Activated CD4-positive, alpha-beta memory T cell treated with anti-CD3 and anti-CD28 coated beads for 36 hours (primary cell): ENCODE measurements at regions of chr2 and their contacts with region 1.

Region 1: GRCh38 chr2:53826587-53827397 is 33.0 kb downstream of the GPR75 start:
- DNase-seq: no peak
- H3K4me3 Mint-ChIP-seq: no peak overlapping the region
- H3K27ac Mint-ChIP-seq: no peak overlapping the region
- H3K4me1 Mint-ChIP-seq: no peaks in the 10 kb centered on the region
- H3K27me3 Mint-ChIP-seq: no peaks in the 10 kb centered on the region

Region 2: DNA sequence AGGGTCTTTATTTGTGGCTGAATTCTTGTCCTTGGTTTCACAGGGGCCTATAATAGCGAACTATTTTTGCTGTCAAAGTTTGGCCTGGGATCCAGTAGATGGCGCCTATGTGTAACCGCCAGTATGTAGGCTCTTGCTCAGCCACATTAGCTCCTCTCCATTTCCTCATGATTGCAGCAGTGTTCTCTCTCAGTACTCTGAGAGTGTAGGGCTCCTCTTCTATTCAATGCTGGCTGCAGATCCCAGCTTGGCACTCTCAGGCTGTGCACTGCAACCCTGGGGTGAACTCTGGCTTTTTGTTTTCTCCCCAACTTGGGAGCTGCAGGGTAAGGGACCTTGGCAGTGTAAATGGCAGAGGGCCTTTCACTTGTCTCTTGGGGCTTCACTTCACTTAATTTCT is 403.8 kb before region 1 on chr2:
- CTCF ChIA-PET with region 1: no interaction called
- POLR2A ChIA-PET with region 1: no interaction called
- intact Hi-C with region 1: loop called (anchors 10 kb)
- DNase-seq: peak; percentile 12
- H3K4me3 Mint-ChIP-seq: no peak overlapping the region
- H3K27ac Mint-ChIP-seq: no peak overlapping the region
- H3K4me1 Mint-ChIP-seq: no peaks in the 10 kb centered on the region
- H3K27me3 Mint-ChIP-seq: peaks cover 3% of the 10 kb centered on the region

Region 3: GRCh38 chr2:53865264-53865663 is 38.5 kb after region 1 on chr2:
- CTCF ChIA-PET with region 1: no interaction called
- POLR2A ChIA-PET with region 1: no interaction called
- intact Hi-C with region 1: no loop called
- DNase-seq: no peak
- H3K4me3 Mint-ChIP-seq: no peak overlapping the region
- H3K27ac Mint-ChIP-seq: no peak overlapping the region
- H3K4me1 Mint-ChIP-seq: peaks cover 3% of the 10 kb centered on the region
- H3K27me3 Mint-ChIP-seq: no peaks in the 10 kb centered on the region

Region 4: DNA sequence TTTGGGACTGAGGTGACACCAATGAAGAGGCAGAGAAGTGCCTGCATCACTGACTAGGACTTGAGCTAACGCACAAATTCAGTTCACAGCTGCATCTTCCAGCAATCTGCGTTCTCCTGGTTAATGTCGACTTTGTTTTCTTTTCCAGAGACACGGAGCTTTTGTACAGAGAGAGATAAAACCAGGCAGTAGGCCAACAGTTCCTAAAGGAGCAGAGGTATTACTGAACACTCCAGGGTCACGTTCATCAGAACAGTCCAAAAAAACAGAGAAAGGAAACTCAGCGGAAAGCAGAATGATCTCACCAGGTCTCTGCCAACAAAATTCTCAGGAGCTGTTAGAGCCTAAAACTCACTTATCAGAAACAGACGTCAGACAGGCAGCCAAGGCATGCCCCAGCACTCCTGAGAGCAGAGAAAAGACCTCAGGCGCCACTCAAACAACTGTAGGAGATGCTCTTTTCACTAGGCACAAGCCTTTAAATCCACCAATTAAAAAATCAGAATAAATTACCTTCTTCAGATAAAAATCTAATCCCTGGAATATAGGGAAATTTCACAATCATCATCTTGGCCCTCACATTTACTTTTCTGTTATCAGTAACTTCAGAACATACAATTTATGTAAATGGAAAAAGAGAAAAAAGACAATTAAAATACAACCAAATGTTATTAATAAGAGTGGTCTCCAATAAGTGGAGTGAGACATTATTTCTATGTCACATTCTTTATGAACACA is 533.4 kb after region 1 on chr2:
- CTCF ChIA-PET with region 1: no interaction called
- POLR2A ChIA-PET with region 1: no interaction called
- intact Hi-C with region 1: no loop called
- DNase-seq: no peak
- H3K4me3 Mint-ChIP-seq: no peak overlapping the region
- H3K27ac Mint-ChIP-seq: no peak overlapping the region
- H3K4me1 Mint-ChIP-seq: no peaks in the 10 kb centered on the region
- H3K27me3 Mint-ChIP-seq: peaks cover 15% of the 10 kb centered on the region